Tibial artery (tissue), 4 donors: ENCODE measurements at regions of chr11 and their contacts with region 1.

Region 1: DNA sequence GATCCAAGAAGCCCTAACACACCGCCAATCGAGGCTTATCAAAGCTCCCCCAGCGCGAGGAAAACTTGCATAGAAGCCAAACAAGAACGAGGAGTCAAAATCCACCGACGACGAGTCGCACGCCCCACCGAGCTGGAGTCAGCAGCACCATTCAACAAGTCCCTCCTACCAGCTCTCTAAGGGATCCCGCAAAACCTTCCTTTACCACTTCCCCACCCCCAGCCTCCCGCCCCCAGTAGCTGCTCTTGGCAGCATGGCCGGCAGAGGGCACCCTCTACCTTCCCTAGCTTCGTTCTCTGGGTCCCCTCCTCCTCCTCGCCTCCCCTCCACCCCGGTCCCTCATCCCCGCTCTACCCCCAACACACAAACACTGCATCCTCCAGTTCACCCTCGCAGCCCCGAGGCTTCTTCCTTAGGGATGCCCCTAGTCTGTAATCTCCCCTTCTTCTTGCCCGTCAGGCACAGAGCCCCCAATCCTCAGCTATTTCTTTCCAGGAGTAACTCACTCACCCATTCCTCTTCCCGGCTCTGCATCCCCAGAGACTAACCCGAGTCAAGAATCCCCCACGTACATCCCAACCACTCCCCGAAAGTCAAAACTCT is 1.3 kb downstream of the BDNF start:
- DNase-seq: peak; percentile 63 to 88
- H3K4me3 ChIP-seq: peak overlapping the region; percentile 58 to 73
- H3K27ac ChIP-seq: peak overlapping the region; percentile 56 to 61
- H3K4me1 ChIP-seq: peaks cover 0 to 61% (median 17%) of the 10 kb centered on the region in 4 donors
- H3K27me3 ChIP-seq: peaks cover 0 to 5% of the 10 kb centered on the region in 2 donors
- CTCF ChIP-seq: peak; percentile 37 to 86

Region 2: DNA sequence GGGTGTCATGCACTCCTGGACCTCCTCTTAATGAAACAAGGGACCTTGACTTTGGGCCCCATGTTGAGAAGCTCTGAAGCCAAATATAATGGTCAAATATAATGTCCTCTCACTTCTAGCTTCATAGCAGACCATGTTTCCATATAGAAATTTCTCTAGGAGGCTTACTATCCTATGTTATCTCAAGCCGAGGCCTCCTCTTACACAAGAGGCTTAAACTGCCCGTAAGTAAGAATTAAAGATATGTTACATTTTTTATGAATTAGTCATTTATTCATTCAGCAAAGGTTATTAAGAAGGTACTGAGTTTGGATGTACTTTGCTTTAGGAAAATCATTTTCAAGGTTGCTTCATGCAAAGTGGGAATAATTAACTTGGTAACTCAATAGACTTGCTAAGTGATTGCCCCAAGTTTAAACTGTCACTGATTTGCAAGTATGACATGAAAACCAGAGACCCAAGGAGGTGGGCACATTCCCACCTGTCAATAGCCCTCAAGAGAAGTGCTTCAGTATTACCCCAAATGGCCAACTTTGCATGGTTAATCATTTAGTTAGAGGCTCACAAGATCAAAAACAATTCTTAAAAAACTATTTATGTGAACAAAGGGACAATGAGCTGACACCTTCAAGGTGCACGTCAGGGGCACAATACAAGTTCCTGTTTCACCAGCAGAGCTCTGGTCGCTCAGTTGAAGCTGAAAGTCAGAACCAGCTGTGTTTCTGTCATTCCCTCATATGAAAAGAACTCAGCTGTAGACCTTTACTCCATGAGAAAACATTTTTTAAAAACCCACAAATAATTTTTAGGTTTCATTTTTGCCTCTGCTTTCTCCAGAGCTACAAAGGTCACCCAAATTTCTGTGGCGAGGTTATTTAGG is 19.6 kb before region 1 on chr11:
- intact Hi-C with region 1: loop called (anchors 2 kb)
- DNase-seq: no peak
- H3K4me3 ChIP-seq: no peak overlapping the region
- H3K27ac ChIP-seq: no peak overlapping the region
- H3K4me1 ChIP-seq: no peaks in the 10 kb centered on the region
- H3K27me3 ChIP-seq: no peaks in the 10 kb centered on the region
- CTCF ChIP-seq: no peak

Region 3: GRCh38 chr11:27916541-27917100 is 217.6 kb after region 1 on chr11:
- intact Hi-C with region 1: no loop called
- DNase-seq: no peak
- H3K4me3 ChIP-seq: no peak overlapping the region
- H3K27ac ChIP-seq: no peak overlapping the region
- H3K4me1 ChIP-seq: no peaks in the 10 kb centered on the region
- H3K27me3 ChIP-seq: no peaks in the 10 kb centered on the region
- CTCF ChIP-seq: no peak

Region 4: DNA sequence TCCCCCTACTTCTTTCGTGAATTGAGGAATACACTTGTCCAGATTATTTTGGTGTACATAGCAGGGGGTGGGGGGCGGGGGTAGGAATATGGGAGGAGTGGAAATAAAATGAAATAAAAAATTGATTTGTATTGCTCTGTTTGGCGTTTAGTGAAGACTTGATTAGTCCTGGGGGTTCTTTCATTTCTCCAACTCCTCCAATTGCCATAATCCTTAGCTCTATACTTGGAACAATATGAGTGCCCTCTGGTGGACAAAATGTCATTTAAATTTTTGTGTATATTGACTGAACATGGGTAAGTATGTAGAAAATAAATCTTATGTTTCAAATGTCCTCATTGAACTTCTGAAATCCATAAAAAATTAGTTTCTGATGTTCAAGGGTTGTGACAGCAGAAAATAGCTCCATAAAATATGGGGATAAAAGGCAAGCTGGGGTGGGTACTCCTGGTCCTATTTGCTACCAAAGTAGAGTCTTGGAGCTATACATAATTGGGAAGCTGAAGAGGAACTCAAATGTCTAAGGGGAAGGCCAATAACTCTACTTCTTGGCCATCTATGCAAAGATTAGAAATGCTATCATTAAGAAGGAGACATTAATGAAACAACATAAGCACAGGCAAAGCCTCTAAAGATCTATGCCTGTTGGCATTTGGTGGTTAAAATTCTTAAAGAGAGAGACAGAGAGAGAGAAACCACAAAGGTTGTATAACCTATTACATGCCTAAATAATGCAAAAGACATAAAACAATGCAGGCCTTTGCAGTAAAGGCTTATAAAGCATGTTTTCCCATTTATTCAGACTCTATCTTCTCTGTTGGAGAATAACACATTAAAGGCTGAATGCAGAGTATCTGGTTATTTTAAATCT is 830.8 kb after region 1 on chr11:
- intact Hi-C with region 1: loop called (anchors 10 kb)
- DNase-seq: no peak
- H3K4me3 ChIP-seq: no peak overlapping the region
- H3K27ac ChIP-seq: no peak overlapping the region
- H3K4me1 ChIP-seq: no peaks in the 10 kb centered on the region
- H3K27me3 ChIP-seq: no peaks in the 10 kb centered on the region
- CTCF ChIP-seq: peak; percentile 40 to 50

Region 5: DNA sequence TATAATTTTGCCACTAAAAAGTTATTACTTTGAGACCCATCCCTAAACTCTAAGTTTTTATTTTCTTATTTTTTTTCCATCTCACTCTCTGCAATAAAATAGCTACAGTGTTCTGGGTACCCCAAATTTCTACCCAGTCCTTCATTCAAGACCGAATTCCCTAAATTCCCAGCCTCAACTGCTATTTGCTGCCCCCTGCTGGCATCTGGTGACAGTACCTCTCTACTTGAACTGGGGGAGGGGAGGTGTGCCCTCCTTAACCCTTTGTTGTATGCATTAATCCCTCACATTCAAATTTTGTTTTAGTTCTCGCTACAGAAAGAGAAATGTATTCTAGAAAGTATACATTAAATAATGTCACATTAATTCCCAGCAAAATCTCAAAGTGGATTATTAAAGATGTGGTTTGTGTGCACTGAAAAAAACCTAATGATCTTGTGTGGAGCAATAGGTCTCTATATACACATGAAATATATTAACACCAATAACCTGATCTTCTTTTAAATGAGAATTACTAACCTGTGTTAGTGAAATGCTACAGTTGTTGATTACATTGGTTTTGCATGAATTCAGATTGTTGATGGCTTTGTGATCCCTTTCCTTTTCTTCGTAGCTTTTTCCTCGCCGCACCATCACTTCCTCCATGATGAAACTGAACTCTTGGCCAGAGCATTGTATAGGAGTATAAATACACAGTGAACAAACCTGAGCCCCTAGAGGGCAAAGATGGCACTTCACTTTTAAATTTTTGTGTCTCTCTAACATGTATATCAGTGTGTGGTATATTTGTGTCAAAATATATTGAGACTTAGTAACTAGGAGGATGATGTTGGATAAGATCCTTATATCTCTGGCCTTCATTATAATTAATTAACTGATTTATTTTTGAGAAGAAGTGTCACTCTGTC is 999.2 kb after region 1 on chr11:
- intact Hi-C with region 1: loop called (anchors 5 kb)
- DNase-seq: peak; percentile 41 to 68
- H3K4me3 ChIP-seq: no peak overlapping the region
- H3K27ac ChIP-seq: no peak overlapping the region
- H3K4me1 ChIP-seq: peaks cover 0 to 4% (median 0%) of the 10 kb centered on the region in 4 donors
- H3K27me3 ChIP-seq: no peaks in the 10 kb centered on the region
- CTCF ChIP-seq: peak; percentile 62 to 69

Region 6: GRCh38 chr11:29333993-29334775 is 1635.2 kb after region 1 on chr11:
- intact Hi-C with region 1: loop called (anchors 10 kb)
- DNase-seq: no peak
- H3K4me3 ChIP-seq: no peak overlapping the region
- H3K27ac ChIP-seq: no peak overlapping the region
- H3K4me1 ChIP-seq: no peaks in the 10 kb centered on the region
- H3K27me3 ChIP-seq: no peaks in the 10 kb centered on the region
- CTCF ChIP-seq: peak; percentile 35 to 36